Heart right ventricle (tissue), 16 donors: ENCODE measurements at regions of chr9 and their contacts with region 1.

Region 1: DNA sequence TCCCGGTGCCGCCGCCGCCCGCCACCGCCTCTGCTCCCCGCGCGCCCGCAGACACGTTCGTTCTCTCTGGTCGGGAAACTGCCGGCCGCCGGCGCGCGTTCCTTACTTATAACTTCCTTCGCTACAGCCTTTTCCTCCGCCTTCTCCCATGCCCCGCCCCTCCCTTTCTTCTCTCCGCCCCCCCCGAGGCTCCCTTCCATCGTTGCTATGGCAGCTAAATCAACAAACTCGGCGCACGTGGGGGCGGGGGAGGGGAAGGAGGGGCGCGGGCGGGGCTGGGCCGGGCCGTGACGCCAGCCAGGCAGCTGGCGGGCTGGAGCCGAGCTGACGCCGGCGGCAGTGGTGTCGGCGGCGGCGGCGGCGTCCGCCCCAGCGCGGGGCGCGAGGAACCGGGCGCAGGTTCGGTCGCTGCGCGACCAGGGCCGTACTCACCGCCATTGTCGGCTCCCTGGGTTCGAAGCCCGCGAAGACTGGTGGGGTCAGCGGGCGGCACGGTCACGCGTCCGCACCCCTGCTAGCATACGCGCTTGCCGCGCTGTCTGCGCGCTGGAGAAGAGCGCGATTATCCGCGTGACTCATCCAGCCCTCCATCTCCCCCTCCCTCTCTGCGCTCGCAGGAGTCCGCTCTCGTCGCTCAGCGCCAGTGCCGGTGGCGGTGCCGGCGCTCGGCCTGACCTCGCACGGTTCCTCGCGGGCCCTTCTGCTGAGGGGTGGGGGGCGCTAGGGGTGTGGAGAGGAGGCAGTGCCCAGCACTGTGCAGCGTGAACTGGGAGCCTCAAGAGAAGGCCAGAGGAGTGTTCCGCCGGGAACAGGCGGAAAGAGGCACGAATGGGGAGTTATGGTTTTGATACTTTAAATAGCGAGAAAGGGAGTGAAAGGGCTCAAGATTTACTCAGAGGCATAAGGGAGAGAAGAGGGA is at the start of gene KLF4:
- DNase-seq: peak; percentile 90 to 94
- ATAC-seq: peak; percentile 76 to 94 (median 84)
- H3K4me3 ChIP-seq: peak within 1 kb of the TSS; percentile 60 to 94 (median 80)
- H3K27ac ChIP-seq: peak within 1 kb of the TSS; percentile 86 to 98 (median 96)
- H3K4me1 ChIP-seq: peaks cover 3 to 64% (median 19%) of the 10 kb centered on the region in 9 donors
- H3K27me3 ChIP-seq: peaks cover 0 to 48% (median 0%) of the 10 kb centered on the region in 7 donors
- CTCF ChIP-seq: peak in 1 of 9 donors; percentile 16
- total RNA-seq, gene KLF4: 16.7 to 62.2 (median 31.0) TPM

Region 2: DNA sequence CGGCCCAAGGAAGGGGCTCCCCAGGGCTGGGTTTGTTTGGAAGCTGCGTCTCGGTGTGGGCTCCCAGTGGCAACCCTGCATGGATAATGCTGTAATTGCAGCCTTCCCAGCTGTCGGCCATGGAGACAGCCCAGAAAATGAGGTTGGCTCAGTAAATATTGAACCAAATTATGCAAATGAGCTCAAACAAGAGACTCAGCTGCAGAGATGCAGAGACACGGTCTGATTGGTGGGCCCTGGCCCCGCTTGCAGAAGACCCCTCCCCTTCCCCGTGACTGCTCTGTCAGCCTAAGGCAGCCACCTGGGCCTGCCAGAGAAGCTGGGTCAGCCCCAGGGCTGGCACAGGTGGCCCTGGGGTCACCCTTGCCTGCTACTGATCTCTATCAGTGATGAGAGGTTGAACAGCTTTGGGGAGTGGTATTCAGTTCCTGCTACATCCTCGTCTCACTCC is 130.9 kb before region 1 on chr9:
- intact Hi-C with region 1: no loop called
- DNase-seq: no peak
- ATAC-seq: no peak
- H3K4me3 ChIP-seq: no peak overlapping the region
- H3K27ac ChIP-seq: no peak overlapping the region
- H3K4me1 ChIP-seq: no peaks in the 10 kb centered on the region
- H3K27me3 ChIP-seq: no peaks in the 10 kb centered on the region
- CTCF ChIP-seq: no peak

Region 3: GRCh38 chr9:107576962-107577776 is 87.2 kb after region 1 on chr9:
- intact Hi-C with region 1: loop called in 2 of 10 experiments (anchors 2 to 10 kb)
- DNase-seq: peak in 1 of 2 donors; percentile 23
- ATAC-seq: peak; percentile 38 to 94 (median 90)
- H3K4me3 ChIP-seq: no peak overlapping the region
- H3K27ac ChIP-seq: peak overlapping the region; percentile 21 to 85 (median 66)
- H3K4me1 ChIP-seq: peaks cover 0 to 16% (median 5%) of the 10 kb centered on the region in 9 donors
- H3K27me3 ChIP-seq: no peaks in the 10 kb centered on the region
- CTCF ChIP-seq: no peak

Region 4: GRCh38 chr9:107637421-107638420 is 147.8 kb after region 1 on chr9:
- intact Hi-C with region 1: loop called in 9 of 10 experiments (anchors 1 to 10 kb)
- DNase-seq: peak; percentile 89 to 97
- ATAC-seq: peak; percentile 92 to 97 (median 94)
- H3K4me3 ChIP-seq: peak overlapping the region; percentile 11 to 60 (median 47)
- H3K27ac ChIP-seq: peak overlapping the region; percentile 88 to 100 (median 98)
- H3K4me1 ChIP-seq: peaks cover 2 to 44% (median 16%) of the 10 kb centered on the region in 9 donors
- H3K27me3 ChIP-seq: no peaks in the 10 kb centered on the region
- CTCF ChIP-seq: peak in 6 of 9 donors; percentile 22 to 52 (median 42)

Region 5: GRCh38 chr9:107749787-107750444 is 260.0 kb after region 1 on chr9:
- intact Hi-C with region 1: loop called in 4 of 10 experiments (anchors 5 to 10 kb)
- DNase-seq: peak; percentile 81 to 91
- ATAC-seq: peak; percentile 88 to 96 (median 94)
- H3K4me3 ChIP-seq: no peak overlapping the region
- H3K27ac ChIP-seq: peak overlapping the region; percentile 56 to 84 (median 76)
- H3K4me1 ChIP-seq: peaks cover 7 to 52% (median 30%) of the 10 kb centered on the region in 9 donors
- H3K27me3 ChIP-seq: no peaks in the 10 kb centered on the region
- CTCF ChIP-seq: no peak

Region 6: GRCh38 chr9:107856633-107857032 is 366.7 kb after region 1 on chr9:
- intact Hi-C with region 1: no loop called
- DNase-seq: no peak
- ATAC-seq: no peak
- H3K4me3 ChIP-seq: no peak overlapping the region
- H3K27ac ChIP-seq: no peak overlapping the region
- H3K4me1 ChIP-seq: no peaks in the 10 kb centered on the region
- H3K27me3 ChIP-seq: no peaks in the 10 kb centered on the region
- CTCF ChIP-seq: no peak

Region 7: GRCh38 chr9:108149326-108149725 is 659.4 kb after region 1 on chr9:
- intact Hi-C with region 1: loop called in 5 of 10 experiments (anchors 5 to 10 kb)
- DNase-seq: no peak
- ATAC-seq: no peak
- H3K4me3 ChIP-seq: no peak overlapping the region
- H3K27ac ChIP-seq: peak overlapping the region in 1 of 10 donors; percentile 71
- H3K4me1 ChIP-seq: peaks cover 0 to 28% (median 17%) of the 10 kb centered on the region in 9 donors
- H3K27me3 ChIP-seq: no peaks in the 10 kb centered on the region
- CTCF ChIP-seq: no peak

Region 8: GRCh38 chr9:108761655-108762347 is 1271.9 kb after region 1 on chr9:
- intact Hi-C with region 1: loop called in 3 of 10 experiments (anchors 5 to 10 kb)
- DNase-seq: peak; percentile 29 to 58
- ATAC-seq: peak in 7 of 8 donors; percentile 47 to 84 (median 80)
- H3K4me3 ChIP-seq: no peak overlapping the region
- H3K27ac ChIP-seq: no peak overlapping the region
- H3K4me1 ChIP-seq: peaks cover 0 to 6% (median 3%) of the 10 kb centered on the region in 9 donors
- H3K27me3 ChIP-seq: peaks cover 0 to 3% (median 0%) of the 10 kb centered on the region in 7 donors
- CTCF ChIP-seq: peak; percentile 78 to 93 (median 89)